GM12878 (cell line): ENCODE measurements at regions of chr12 and their contacts with region 1.

Region 1: GRCh38 chr12:132956011-132956788 is at the start of gene ZNF605:
- DNase-seq: peak; percentile 37
- ATAC-seq: peak; percentile 97
- H3K4me3 ChIP-seq: peak within 1 kb of the TSS; percentile 86
- H3K27ac ChIP-seq: peak within 1 kb of the TSS; percentile 76
- H3K4me1 ChIP-seq: no peaks in the 10 kb centered on the region; the same call in 1 of the 2 replicates
- H3K27me3 ChIP-seq: no peaks in the 10 kb centered on the region
- CTCF ChIP-seq: no peak
- EP300 ChIP-seq: no peak
- POLR2A ChIP-seq: peak; percentile 75
- RAD21 ChIP-seq: no peak
- polyA plus RNA-seq, gene ZNF605: 0.95 to 1.3 TPM

Region 2: DNA sequence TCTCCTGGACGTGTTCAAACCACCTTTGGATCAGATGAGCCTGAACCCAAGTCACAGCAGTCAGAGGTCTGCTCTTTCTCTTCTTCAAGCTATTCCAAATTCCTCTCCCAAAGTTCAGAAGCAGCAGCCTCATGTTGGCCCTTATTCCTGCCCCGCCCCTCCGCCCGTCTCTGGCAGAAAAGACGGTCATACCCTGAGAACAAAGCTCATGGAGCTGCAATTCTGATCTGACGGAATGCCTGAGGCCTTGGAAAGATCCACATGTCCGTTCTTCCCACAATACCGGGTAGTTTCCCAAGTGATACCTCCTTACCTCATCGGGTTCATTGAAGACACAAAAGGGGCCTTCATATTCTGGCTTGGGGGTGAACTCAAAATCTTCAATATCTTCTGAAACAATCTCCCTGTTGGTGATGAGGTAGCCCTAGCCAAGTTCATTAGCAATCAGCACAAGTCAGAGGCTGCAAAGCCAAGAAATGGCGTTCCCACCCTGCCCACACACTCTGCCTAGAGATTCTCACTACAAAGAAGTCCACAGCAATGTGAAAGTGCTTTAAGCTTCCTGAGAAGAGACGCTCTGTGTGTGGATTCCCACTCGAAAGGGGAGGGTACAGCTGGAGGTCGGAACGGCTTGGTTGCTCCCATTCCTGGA is 280.3 kb before region 1 on chr12:
- CTCF ChIA-PET with region 1: no interaction called
- POLR2A ChIA-PET with region 1: interaction called, 10 read pairs
- RAD21 ChIA-PET with region 1: no interaction called
- SMC1A ChIA-PET with region 1: no interaction called
- in situ Hi-C with region 1: no loop called
- intact Hi-C with region 1: no loop called
- DNase-seq: no peak
- ATAC-seq: no peak
- H3K4me3 ChIP-seq: no peak overlapping the region
- H3K27ac ChIP-seq: no peak overlapping the region
- H3K4me1 ChIP-seq: no peaks in the 10 kb centered on the region
- H3K27me3 ChIP-seq: no peaks in the 10 kb centered on the region
- CTCF ChIP-seq: no peak
- EP300 ChIP-seq: no peak
- POLR2A ChIP-seq: no peak
- RAD21 ChIP-seq: no peak

Region 3: DNA sequence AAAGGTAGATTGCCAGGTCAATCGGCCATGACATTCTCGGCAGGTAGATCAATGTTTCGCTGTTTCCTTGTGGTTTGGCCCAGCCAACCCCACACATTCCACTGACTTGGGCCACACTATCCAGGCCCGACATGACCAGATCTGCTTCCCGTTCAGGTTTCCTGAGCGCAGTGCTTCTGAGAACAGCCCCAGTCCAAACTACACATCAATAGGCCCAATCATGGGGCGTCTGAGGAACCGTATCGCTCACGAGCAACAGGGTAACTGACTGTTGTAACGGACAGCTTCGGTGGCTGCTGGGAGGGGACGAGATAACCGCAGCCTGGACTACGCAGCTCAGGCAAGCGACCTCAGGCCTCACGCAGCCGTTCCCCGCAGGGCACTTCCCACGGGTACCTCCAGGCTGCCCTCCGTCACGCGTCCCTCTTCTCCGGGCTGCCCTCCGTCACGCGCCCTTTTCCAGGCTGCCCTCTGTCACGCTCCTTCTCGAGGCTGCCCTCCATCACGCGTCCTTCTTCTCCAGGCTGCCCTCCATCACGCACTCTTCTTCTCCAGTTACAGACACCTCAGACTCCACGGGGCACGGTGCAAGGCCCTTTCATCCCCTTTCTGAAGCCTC is 14.8 kb before region 1 on chr12:
- CTCF ChIA-PET with region 1: no interaction called
- POLR2A ChIA-PET with region 1: no interaction called
- RAD21 ChIA-PET with region 1: no interaction called
- SMC1A ChIA-PET with region 1: no interaction called
- in situ Hi-C with region 1: no loop called
- intact Hi-C with region 1: no loop called
- DNase-seq: no peak
- ATAC-seq: no peak
- H3K4me3 ChIP-seq: no peak overlapping the region
- H3K27ac ChIP-seq: no peak overlapping the region
- H3K4me1 ChIP-seq: no peaks in the 10 kb centered on the region
- H3K27me3 ChIP-seq: no peaks in the 10 kb centered on the region
- CTCF ChIP-seq: no peak
- EP300 ChIP-seq: no peak
- POLR2A ChIP-seq: no peak
- RAD21 ChIP-seq: no peak

Region 4: DNA sequence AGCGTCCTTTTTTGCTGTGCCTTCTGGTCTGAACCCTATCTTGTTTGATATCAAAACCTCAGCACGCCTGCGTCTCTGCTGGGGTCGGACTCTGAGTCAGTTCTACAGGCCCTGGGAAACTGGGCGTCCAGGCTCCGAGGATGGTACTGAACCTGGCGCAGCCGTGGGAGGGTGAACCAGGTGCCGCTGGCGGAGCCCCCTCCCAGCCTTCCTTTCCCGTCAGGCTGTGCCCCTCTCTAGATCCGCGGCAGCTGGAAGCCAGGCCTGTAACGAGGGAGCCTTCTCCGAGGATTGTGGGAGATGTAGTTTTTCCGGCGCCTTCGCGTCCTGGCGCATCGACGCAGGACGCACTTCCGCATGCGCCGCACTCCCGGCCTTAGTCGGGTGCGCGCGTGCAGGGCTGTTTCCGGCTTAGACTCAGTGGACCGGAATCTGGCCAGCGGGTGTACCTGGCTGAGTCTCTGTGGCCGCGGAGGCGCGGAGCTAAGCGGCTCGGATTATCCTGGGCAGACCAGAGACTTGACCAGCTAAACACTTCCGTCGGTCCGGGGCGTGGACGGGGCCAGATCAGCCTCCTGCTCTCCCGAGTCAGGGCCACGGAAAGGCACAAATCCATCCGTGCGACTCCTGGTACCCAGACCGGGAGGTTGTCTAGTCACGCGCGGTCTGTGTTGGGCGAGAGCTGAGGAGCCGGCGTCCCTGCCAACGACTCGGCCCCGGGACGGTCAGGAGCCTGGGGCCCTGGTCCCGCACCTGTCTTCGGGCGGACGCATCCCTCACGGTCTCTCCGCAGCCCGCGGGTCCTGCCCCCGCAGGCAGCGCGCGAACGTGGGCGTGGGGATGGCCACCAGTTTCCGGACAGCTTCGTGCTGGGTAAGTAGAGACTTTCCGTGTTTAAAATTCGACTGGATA is 30.1 kb after region 1 on chr12 and contains the start of gene ZNF26:
- CTCF ChIA-PET with region 1: no interaction called
- POLR2A ChIA-PET with region 1: interaction called, 4 read pairs
- RAD21 ChIA-PET with region 1: interaction called, 3 read pairs
- SMC1A ChIA-PET with region 1: no interaction called
- in situ Hi-C with region 1: no loop called
- intact Hi-C with region 1: loop called (anchors 2 kb)
- DNase-seq: peak; percentile 72
- ATAC-seq: peak; percentile 99
- H3K4me3 ChIP-seq: peak within 1 kb of the TSS; percentile 83
- H3K27ac ChIP-seq: peak within 1 kb of the TSS; percentile 82
- H3K4me1 ChIP-seq: peaks cover 4% of the 10 kb centered on the region; the same call in 1 of the 2 replicates
- H3K27me3 ChIP-seq: no peaks in the 10 kb centered on the region
- CTCF ChIP-seq: no peak
- EP300 ChIP-seq: peak in 1 of 2 experiments; percentile 18; a peak in 1 of 4 replicates
- POLR2A ChIP-seq: peak; percentile 95
- RAD21 ChIP-seq: no peak
- polyA plus RNA-seq, gene ZNF26: 1.00 to 1.4 TPM